Aorta (tissue), 5 donors: ENCODE measurements at regions of chr1 and their contacts with region 1.

Region 1: GRCh38 chr1:155323798-155324610 is 3.3 kb downstream of the RUSC1 start:
- DNase-seq: peak; percentile 98
- ATAC-seq: peak; percentile 92
- H3K4me3 ChIP-seq: peak overlapping the region; percentile 63 to 93
- H3K27ac ChIP-seq: peak overlapping the region; percentile 74 to 84
- H3K4me1 ChIP-seq: no peaks in the 10 kb centered on the region
- H3K27me3 ChIP-seq: no peaks in the 10 kb centered on the region

Region 2: DNA sequence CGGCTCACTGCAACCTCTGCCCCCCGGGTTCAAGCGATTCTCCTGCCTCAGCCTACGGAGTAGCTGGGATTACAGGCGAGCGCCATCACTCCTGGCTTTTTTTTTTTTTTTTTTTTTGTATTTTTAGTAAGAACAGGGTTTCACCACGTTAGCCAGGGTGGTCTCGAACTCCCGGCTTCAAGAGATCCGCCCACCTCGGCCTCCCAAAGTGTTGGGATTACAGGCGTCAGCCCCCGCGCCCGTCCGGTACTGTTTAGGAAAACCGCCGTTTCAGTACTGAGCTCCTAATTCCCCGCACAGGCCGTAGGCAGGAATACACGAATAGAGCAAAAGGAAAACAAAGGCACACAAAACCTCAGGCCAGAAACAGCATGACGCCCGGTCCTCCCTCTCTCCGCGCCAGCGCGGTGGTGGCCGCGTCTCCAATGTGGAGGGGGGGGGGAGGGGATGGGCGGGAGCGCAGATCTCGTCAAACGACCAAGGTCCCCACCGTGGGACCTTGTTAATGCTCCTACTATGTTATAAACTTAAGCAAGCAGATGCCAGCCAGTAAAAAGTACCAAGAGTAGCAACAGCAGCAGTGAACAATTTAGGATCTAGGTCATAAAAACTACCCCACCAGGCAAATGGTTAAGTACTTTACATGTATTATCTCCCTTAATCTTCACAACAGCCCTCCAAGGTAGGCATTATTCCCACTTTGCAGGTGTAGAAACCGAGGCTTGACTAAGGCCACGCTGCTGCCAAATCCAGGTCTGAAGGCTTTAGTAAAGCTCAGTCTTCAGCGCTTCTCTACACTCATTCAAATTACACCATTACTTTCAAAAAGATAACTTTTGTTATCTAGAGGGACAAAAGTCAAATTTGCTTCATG is 715.4 kb before region 1 on chr1:
- intact Hi-C with region 1: no loop called
- DNase-seq: peak; percentile 69 to 82
- ATAC-seq: peak; percentile 72
- H3K4me3 ChIP-seq: peak overlapping the region; percentile 74 to 96
- H3K27ac ChIP-seq: peak overlapping the region; percentile 46 to 81
- H3K4me1 ChIP-seq: no peaks in the 10 kb centered on the region
- H3K27me3 ChIP-seq: no peaks in the 10 kb centered on the region

Region 3: GRCh38 chr1:155193275-155193990 is 130.6 kb before region 1 on chr1:
- intact Hi-C with region 1: loop called in 1 of 2 experiments (anchors 5 kb)
- DNase-seq: peak; percentile 94 to 97
- ATAC-seq: peak; percentile 92
- H3K4me3 ChIP-seq: no peak overlapping the region
- H3K27ac ChIP-seq: peak overlapping the region in 1 of 2 donors; percentile 68
- H3K4me1 ChIP-seq: no peaks in the 10 kb centered on the region
- H3K27me3 ChIP-seq: no peaks in the 10 kb centered on the region

Region 4: GRCh38 chr1:155208541-155209311 is 115.3 kb before region 1 on chr1 and contains the start of gene MTX1:
- intact Hi-C with region 1: loop called in 1 of 2 experiments (anchors 5 kb)
- DNase-seq: peak; percentile 96 to 98
- ATAC-seq: peak; percentile 93
- H3K4me3 ChIP-seq: peak within 1 kb of the TSS; percentile 34 to 60
- H3K27ac ChIP-seq: peak within 1 kb of the TSS; percentile 98 to 99
- H3K4me1 ChIP-seq: no peaks in the 10 kb centered on the region
- H3K27me3 ChIP-seq: no peaks in the 10 kb centered on the region
- total RNA-seq, gene MTX1: 20.3 to 21.3 TPM

Region 5: DNA sequence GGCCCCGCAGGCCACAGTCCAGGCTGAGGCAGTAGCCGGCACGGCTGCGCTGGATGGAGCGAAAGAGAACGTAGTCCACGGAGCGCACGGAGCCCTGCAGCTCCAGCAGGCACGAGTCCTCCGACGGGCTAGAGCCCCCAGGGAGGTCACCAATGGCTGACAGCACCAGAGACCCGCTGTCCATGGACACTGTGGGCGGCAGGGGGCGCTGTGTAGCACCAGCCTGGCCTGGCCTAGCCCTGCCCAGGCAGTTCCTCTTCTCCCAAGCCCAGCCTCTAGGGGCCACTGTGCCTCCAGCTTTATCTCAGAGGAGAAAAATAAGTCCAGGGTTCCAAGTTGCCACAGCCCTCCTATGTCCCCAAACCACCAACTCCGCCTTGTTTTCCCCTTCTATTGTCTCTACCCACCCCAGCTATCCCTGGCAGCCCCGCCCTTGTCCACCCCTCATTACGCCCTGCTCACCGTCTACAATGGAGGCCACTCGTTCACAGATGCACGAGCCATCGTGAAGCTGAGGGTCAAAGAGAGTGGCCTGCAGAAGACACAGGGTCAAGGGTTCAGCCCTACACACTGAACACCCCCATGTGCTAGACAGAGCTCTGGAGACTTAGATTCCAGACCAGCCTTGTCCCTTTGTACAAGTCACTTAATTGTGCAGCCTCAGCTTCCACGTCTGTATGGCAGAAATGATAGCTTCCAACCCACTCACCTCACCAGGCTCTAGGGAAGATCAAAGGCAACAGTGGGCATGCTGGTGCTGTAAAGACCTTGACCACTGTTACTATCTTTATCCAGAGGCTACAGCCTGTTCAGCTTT is 73.2 kb before region 1 on chr1:
- intact Hi-C with region 1: loop called (anchors 2 to 5 kb)
- DNase-seq: peak; percentile 95 to 98
- ATAC-seq: peak; percentile 91
- H3K4me3 ChIP-seq: no peak overlapping the region
- H3K27ac ChIP-seq: no peak overlapping the region
- H3K4me1 ChIP-seq: no peaks in the 10 kb centered on the region
- H3K27me3 ChIP-seq: no peaks in the 10 kb centered on the region

Region 6: DNA sequence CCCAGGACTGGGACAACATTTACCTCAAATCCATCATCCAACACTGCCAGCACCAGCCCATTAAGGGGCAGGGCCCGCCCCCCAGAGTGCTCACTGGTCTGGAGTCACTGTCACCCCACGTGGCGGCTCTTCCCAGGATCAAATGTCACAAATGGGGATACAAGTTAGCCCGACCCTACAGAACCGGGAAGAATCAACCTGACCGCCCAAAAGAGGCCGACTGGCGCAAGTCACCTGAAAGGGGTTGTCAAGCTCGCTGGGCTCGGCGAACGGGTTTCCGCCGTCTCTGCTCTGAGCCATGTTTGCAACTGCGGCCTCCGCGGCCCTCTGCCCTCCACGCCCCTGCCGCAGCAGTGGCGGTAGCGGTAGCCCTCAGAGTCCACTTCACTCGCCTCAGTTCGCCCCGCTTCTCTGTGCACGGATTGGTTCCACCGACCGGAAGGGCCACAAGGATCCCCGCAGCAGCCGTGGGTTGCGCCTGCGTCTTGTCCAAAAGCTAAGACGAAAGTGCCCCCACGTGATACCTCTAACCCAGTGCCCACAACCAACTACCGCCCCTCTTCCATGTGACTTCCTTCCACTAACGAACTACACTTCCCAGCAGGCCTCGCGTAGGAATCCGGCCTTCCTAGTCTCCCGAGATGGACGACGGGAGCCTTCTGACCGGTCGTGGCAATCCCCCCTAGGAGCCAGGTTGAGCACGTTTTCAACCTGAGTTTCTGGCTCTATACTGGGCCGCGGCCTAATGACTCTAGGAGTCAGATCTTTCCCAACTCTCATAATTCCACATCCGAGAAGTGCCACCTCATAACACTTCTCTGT is 61.9 kb before region 1 on chr1 and contains the start of gene SCAMP3:
- intact Hi-C with region 1: loop called in 1 of 2 experiments (anchors 5 kb)
- DNase-seq: peak; percentile 96 to 97
- ATAC-seq: peak; percentile 97
- H3K4me3 ChIP-seq: peak within 1 kb of the TSS; percentile 51 to 79
- H3K27ac ChIP-seq: peak within 1 kb of the TSS; percentile 49 to 68
- H3K4me1 ChIP-seq: no peaks in the 10 kb centered on the region
- H3K27me3 ChIP-seq: no peaks in the 10 kb centered on the region
- total RNA-seq, gene SCAMP3: 36.9 to 39.7 TPM

Region 7: GRCh38 chr1:155277070-155277895 is 46.7 kb before region 1 on chr1 and contains the start of gene HCN3:
- intact Hi-C with region 1: loop called (anchors 1 to 2 kb)
- DNase-seq: peak; percentile 98 to 99
- ATAC-seq: peak; percentile 92
- H3K4me3 ChIP-seq: peak within 1 kb of the TSS; percentile 36 to 44
- H3K27ac ChIP-seq: peak within 1 kb of the TSS in 1 of 2 donors; percentile 2
- H3K4me1 ChIP-seq: peaks cover 0 to 3% of the 10 kb centered on the region in 2 donors
- H3K27me3 ChIP-seq: no peaks in the 10 kb centered on the region
- total RNA-seq, gene HCN3: 1.8 to 5.7 TPM

Region 8: DNA sequence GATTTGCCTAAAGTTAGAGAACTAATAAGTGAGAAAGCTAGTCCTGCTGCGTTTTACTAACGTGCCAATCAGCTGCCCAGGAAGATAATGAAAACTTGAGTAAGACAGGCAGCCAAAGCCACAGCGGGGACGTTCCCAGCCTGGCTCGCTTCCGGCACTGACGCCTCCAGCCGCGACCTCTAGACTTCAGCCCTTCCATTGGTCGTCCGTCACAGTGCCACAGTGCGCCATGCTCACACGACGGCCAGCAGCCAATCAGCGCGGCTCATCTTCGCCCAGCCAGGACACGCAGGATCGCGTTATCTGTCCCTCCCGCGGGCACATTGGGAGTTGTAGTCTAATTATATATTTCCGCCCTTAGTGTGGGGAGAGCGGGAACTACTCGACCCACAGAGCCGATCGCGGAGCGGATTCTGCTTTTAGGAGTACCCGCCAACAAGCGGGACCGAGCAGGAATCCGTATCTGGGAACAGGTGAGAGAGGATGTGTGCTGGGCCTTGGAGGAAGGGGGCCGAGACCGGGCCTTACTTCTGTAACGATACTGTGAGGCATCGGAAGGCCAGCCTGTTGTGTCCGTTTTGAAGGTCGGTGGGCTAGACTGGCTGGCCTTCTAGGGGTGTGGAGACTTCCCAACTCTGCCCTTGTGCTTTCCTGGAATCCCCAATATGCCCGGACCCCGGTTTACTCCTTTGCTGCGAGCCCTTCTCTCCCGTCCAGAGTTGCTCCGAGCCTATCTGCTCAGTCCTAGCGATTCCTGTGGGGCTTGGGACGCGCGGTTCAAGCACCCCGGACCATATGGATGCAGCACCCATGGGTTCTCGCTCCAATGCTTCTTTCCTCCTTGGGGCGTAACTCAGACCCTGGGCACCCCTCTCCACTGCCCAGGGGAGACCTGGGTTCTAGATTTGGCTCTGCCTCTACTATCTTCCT is 15.2 kb before region 1 on chr1 and contains the start of gene FDPS:
- intact Hi-C with region 1: loop called in 1 of 2 experiments (anchors 2 kb)
- DNase-seq: peak; percentile 99 to 100
- ATAC-seq: peak; percentile 99
- H3K4me3 ChIP-seq: peak within 1 kb of the TSS; percentile 50 to 53
- H3K27ac ChIP-seq: peak within 1 kb of the TSS in 1 of 2 donors; percentile 71
- H3K4me1 ChIP-seq: peaks cover 0 to 1% of the 10 kb centered on the region in 2 donors
- H3K27me3 ChIP-seq: no peaks in the 10 kb centered on the region
- total RNA-seq, gene FDPS: 88.6 to 104 TPM